SK-N-SH (cell line): ENCODE measurements at regions of chr2 and their contacts with region 1.

Region 1: GRCh38 chr2:189661148-189661956 is at the start of gene ASNSD1:
- DNase-seq: peak; percentile 96
- H3K4me3 ChIP-seq: peak within 1 kb of the TSS; percentile 93 to 99
- H3K27ac ChIP-seq: peak within 1 kb of the TSS; percentile 56 to 87
- H3K4me1 ChIP-seq: peaks cover 0 to 6% of the 10 kb centered on the region in 2 experiments; a peak in 3 of 4 replicates
- H3K27me3 ChIP-seq: no peaks in the 10 kb centered on the region
- CTCF ChIP-seq: peak; percentile 98
- EP300 ChIP-seq: peak in 1 of 2 experiments; percentile 33; a peak in 1 of 4 replicates
- RAD21 ChIP-seq: peak; percentile 99
- polyA plus RNA-seq, gene ASNSD1: 15.5 and 19.5 TPM in 2 replicates

Region 2: GRCh38 chr2:189129971-189130370 is 531.4 kb before region 1 on chr2:
- CTCF ChIA-PET with region 1: no interaction called
- POLR2A ChIA-PET with region 1: no interaction called
- DNase-seq: no peak
- H3K4me3 ChIP-seq: no peak overlapping the region
- H3K27ac ChIP-seq: peak overlapping the region; percentile 92 to 100
- H3K4me1 ChIP-seq: peaks cover 0 to 25% of the 10 kb centered on the region in 2 experiments; a peak in 2 of 4 replicates
- H3K27me3 ChIP-seq: no peaks in the 10 kb centered on the region
- CTCF ChIP-seq: no peak
- EP300 ChIP-seq: peak; percentile 61 to 96
- RAD21 ChIP-seq: no peak

Region 3: GRCh38 chr2:189614597-189614996 is 46.8 kb before region 1 on chr2:
- CTCF ChIA-PET with region 1: interaction called, 11 read pairs
- POLR2A ChIA-PET with region 1: no interaction called
- DNase-seq: no peak
- H3K4me3 ChIP-seq: no peak overlapping the region
- H3K27ac ChIP-seq: no peak overlapping the region
- H3K4me1 ChIP-seq: peaks cover 9 to 12% of the 10 kb centered on the region in 2 experiments; a peak in 3 of 4 replicates
- H3K27me3 ChIP-seq: no peaks in the 10 kb centered on the region
- CTCF ChIP-seq: no peak
- EP300 ChIP-seq: no peak
- RAD21 ChIP-seq: no peak

Region 4: GRCh38 chr2:189638301-189639003 is 22.9 kb before region 1 on chr2:
- CTCF ChIA-PET with region 1: interaction called, 19 read pairs
- POLR2A ChIA-PET with region 1: no interaction called
- DNase-seq: no peak
- H3K4me3 ChIP-seq: no peak overlapping the region
- H3K27ac ChIP-seq: no peak overlapping the region
- H3K4me1 ChIP-seq: no peaks in the 10 kb centered on the region
- H3K27me3 ChIP-seq: no peaks in the 10 kb centered on the region
- CTCF ChIP-seq: no peak
- EP300 ChIP-seq: no peak
- RAD21 ChIP-seq: no peak

Region 5: GRCh38 chr2:189674374-189675112 is 13.2 kb after region 1 on chr2 and contains the start of gene ANKAR:
- CTCF ChIA-PET with region 1: interaction called, 99 read pairs
- POLR2A ChIA-PET with region 1: no interaction called
- DNase-seq: peak; percentile 93
- H3K4me3 ChIP-seq: peak within 1 kb of the TSS; percentile 69 to 76
- H3K27ac ChIP-seq: peak within 1 kb of the TSS; percentile 84 to 90
- H3K4me1 ChIP-seq: peaks cover 0 to 6% of the 10 kb centered on the region in 2 experiments; a peak in 2 of 4 replicates
- H3K27me3 ChIP-seq: no peaks in the 10 kb centered on the region
- CTCF ChIP-seq: peak; percentile 84
- EP300 ChIP-seq: no peak
- RAD21 ChIP-seq: peak; percentile 49
- polyA plus RNA-seq, gene ANKAR: 1.6 and 2.1 TPM in 2 replicates

Region 6: GRCh38 chr2:189709501-189710221 is 48.3 kb after region 1 on chr2:
- CTCF ChIA-PET with region 1: interaction called, 21 read pairs
- POLR2A ChIA-PET with region 1: no interaction called
- DNase-seq: peak; percentile 44
- H3K4me3 ChIP-seq: no peak overlapping the region
- H3K27ac ChIP-seq: peak overlapping the region in 1 of 2 experiments; percentile 43; a peak in 2 of 4 replicates
- H3K4me1 ChIP-seq: no peaks in the 10 kb centered on the region; a peak in 1 of 4 replicates
- H3K27me3 ChIP-seq: no peaks in the 10 kb centered on the region
- CTCF ChIP-seq: no peak
- EP300 ChIP-seq: no peak
- RAD21 ChIP-seq: no peak